Caco-2 (cell line): ENCODE measurements at regions of chr10 and their contacts with region 1.

Region 1: GRCh38 chr10:48444266-48444665 is 137.8 kb downstream of the MAPK8 start:
- DNase-seq: peak; percentile 52 to 56
- H3K4me3 ChIP-seq: no peak overlapping the region
- H3K4me3 Mint-ChIP-seq: no peak overlapping the region
- H3K27ac Mint-ChIP-seq: no peak overlapping the region
- H3K4me1 ChIP-seq: peaks cover 8% of the 10 kb centered on the region
- H3K4me1 Mint-ChIP-seq: peaks cover 15% of the 10 kb centered on the region
- H3K27me3 ChIP-seq: no peaks in the 10 kb centered on the region
- H3K27me3 Mint-ChIP-seq: no peaks in the 10 kb centered on the region
- CTCF ChIP-seq: peak; percentile 29 to 68

Region 2: DNA sequence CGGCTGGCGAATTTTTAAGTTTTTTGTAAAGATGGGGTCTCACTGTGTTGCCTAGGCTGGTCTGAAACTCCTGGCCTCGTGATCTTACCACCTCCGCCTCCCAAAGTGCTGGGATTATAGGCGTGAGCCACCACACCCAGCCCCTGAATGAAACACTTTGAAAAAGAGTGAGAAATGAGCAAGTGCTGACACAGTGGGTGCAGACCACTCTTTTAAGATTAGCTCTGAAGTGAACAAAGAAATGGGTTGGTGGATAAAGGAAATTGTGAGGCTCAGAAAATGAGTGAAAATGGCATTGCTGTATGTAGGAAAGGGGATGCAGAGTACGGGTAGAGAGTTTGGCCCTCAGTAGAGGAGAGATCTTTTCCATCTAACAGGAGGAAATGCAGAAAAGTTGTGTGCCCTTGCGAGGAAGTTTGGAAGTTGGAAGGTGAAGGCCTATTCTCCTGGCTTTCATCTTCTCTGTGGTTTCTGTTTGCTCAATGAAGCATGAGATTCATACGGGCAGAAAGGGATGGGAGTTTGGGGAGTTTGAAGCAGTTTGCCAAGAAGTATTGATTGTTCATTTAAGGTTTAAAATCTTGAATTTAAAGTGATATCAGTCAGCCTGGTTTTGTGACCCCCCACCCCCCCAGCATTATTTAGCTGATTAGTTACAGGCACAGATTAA is 126.8 kb before region 1 on chr10:
- CTCF ChIA-PET with region 1: no interaction called
- POLR2A ChIA-PET with region 1: no interaction called
- intact Hi-C with region 1: no loop called
- DNase-seq: no peak
- H3K4me3 ChIP-seq: no peak overlapping the region
- H3K4me3 Mint-ChIP-seq: no peak overlapping the region
- H3K27ac Mint-ChIP-seq: no peak overlapping the region
- H3K4me1 ChIP-seq: peaks cover 11% of the 10 kb centered on the region
- H3K4me1 Mint-ChIP-seq: no peaks in the 10 kb centered on the region
- H3K27me3 ChIP-seq: no peaks in the 10 kb centered on the region
- H3K27me3 Mint-ChIP-seq: no peaks in the 10 kb centered on the region
- CTCF ChIP-seq: no peak

Region 3: GRCh38 chr10:48416584-48417232 is 27.6 kb before region 1 on chr10:
- CTCF ChIA-PET with region 1: interaction called, 4 read pairs
- POLR2A ChIA-PET with region 1: no interaction called
- intact Hi-C with region 1: loop called (anchors 1 kb)
- DNase-seq: peak; percentile 60 to 62
- H3K4me3 ChIP-seq: no peak overlapping the region
- H3K4me3 Mint-ChIP-seq: peak overlapping the region; percentile 42
- H3K27ac Mint-ChIP-seq: peak overlapping the region; percentile 29
- H3K4me1 ChIP-seq: peaks cover 34% of the 10 kb centered on the region
- H3K4me1 Mint-ChIP-seq: peaks cover 28% of the 10 kb centered on the region
- H3K27me3 ChIP-seq: no peaks in the 10 kb centered on the region
- H3K27me3 Mint-ChIP-seq: no peaks in the 10 kb centered on the region
- CTCF ChIP-seq: peak in 1 of 2 experiments; percentile 53

Region 4: GRCh38 chr10:48454298-48455054 is 10.2 kb after region 1 on chr10:
- CTCF ChIA-PET with region 1: interaction called, 24 read pairs
- POLR2A ChIA-PET with region 1: no interaction called
- intact Hi-C with region 1: no loop called
- DNase-seq: peak; percentile 83 to 92
- H3K4me3 ChIP-seq: no peak overlapping the region
- H3K4me3 Mint-ChIP-seq: peak overlapping the region; percentile 42
- H3K27ac Mint-ChIP-seq: peak overlapping the region; percentile 92
- H3K4me1 ChIP-seq: peaks cover 47% of the 10 kb centered on the region
- H3K4me1 Mint-ChIP-seq: peaks cover 19% of the 10 kb centered on the region
- H3K27me3 ChIP-seq: no peaks in the 10 kb centered on the region
- H3K27me3 Mint-ChIP-seq: no peaks in the 10 kb centered on the region
- CTCF ChIP-seq: no peak

Region 5: GRCh38 chr10:48463318-48464003 is 19.2 kb after region 1 on chr10:
- CTCF ChIA-PET with region 1: interaction called, 14 read pairs
- POLR2A ChIA-PET with region 1: interaction called, 3 read pairs
- intact Hi-C with region 1: no loop called
- DNase-seq: peak; percentile 61
- H3K4me3 ChIP-seq: no peak overlapping the region
- H3K4me3 Mint-ChIP-seq: no peak overlapping the region
- H3K27ac Mint-ChIP-seq: peak overlapping the region; percentile 28
- H3K4me1 ChIP-seq: peaks cover 16% of the 10 kb centered on the region
- H3K4me1 Mint-ChIP-seq: peaks cover 28% of the 10 kb centered on the region
- H3K27me3 ChIP-seq: no peaks in the 10 kb centered on the region
- H3K27me3 Mint-ChIP-seq: no peaks in the 10 kb centered on the region
- CTCF ChIP-seq: peak in 1 of 2 experiments; percentile 47

Region 6: DNA sequence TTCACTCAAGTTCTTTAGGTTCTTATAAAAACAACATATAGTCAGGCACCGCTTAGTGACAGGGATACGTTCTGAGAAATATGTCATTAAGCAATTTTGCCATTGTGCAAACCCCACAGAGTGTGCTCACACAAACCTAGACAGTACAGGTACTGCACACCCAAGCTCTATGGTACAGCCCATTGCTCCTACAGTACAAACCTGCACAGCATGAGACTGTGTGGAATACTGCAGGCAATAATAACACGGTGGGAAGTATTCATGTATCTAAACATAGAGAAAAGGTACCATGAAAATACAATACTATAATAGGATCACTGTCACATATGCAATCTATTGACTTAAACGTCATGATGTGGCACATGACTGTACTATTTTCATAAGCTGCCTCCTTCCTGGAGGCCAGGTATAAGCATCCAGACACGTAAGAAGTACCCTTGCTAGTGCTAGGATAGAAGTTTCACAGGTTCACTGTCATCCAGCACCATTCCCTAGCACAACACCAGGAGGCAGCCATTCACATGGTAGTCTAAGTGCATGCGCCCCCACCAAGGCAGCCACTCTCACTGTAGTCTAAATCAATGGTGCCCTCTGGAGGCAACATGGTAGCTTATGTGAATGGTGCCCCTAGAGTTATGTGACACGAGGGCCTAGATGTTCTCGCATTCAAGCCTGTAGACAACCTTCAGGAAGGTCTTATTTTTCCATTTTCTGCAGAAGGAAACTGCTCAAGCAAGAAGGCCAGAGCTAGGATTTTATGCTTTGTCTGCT is 62.1 kb after region 1 on chr10:
- CTCF ChIA-PET with region 1: interaction called, 18 read pairs
- POLR2A ChIA-PET with region 1: no interaction called
- intact Hi-C with region 1: loop called (anchors 1 kb)
- DNase-seq: peak; percentile 69 to 74
- H3K4me3 ChIP-seq: no peak overlapping the region
- H3K4me3 Mint-ChIP-seq: no peak overlapping the region
- H3K27ac Mint-ChIP-seq: no peak overlapping the region
- H3K4me1 ChIP-seq: no peaks in the 10 kb centered on the region
- H3K4me1 Mint-ChIP-seq: no peaks in the 10 kb centered on the region
- H3K27me3 ChIP-seq: no peaks in the 10 kb centered on the region
- H3K27me3 Mint-ChIP-seq: no peaks in the 10 kb centered on the region
- CTCF ChIP-seq: peak; percentile 56 to 68